ENCODE measurements at regions of chr12 and their contacts with region 1.

Region 1: GRCh38 chr12:66708704-66709456 is 30.0 kb upstream of the GRIP1 start:
- DNase-seq: no peak
- CTCF ChIP-seq: peak; percentile 41

Region 2: DNA sequence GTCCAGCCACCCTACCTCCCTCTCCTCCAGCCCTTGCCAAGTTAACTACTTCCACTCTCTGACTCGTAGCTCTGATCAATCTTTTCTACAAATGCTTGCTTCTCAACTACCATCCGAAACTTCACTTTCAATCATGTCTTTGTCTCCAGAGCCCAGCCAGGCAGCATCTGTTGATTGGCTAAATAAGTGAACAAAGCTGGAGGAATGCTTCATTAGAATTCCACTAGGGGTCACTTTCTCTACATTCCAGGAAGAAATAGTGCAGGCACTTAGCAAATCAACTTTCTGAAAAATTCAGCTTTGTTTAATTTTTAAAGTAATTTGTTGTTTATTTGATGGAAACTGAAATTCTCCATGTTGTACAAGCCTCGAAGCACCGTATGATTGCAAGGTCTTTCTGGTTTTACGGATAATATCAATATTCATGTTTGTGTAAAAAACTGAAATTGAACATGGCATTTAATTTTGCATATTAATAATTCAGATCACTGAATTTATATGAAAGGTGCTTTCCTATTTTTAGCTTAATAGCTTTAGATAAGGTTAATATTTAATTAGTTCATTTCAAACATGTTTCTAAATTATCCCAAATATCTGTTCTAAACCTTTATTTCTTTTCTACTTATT is 439.0 kb before region 1 on chr12:
- in situ Hi-C with region 1: loop called (anchors 25 kb)
- DNase-seq: peak; percentile 28
- CTCF ChIP-seq: peak; percentile 59